Activated CD8-positive, alpha-beta T cell treated with anti-CD3 and anti-CD28 coated beads, Interleukin-2, amount 10 ng/mL, durations not matched to agents 7 days and 5 days (primary cell): ENCODE measurements at regions of chr1 and their contacts with region 1.

Region 1: GRCh38 chr1:108691942-108692723 is at the start of gene PRPF38B:
- DNase-seq: peak; percentile 97
- ATAC-seq: peak; percentile 89
- H3K4me3 Mint-ChIP-seq: peak within 1 kb of the TSS; percentile 96
- H3K27ac Mint-ChIP-seq: peak within 1 kb of the TSS; percentile 99
- H3K4me1 Mint-ChIP-seq: peaks cover 42% of the 10 kb centered on the region
- H3K27me3 Mint-ChIP-seq: no peaks in the 10 kb centered on the region
- total RNA-seq, gene PRPF38B: 66.8 to 69.1 TPM

Region 2: DNA sequence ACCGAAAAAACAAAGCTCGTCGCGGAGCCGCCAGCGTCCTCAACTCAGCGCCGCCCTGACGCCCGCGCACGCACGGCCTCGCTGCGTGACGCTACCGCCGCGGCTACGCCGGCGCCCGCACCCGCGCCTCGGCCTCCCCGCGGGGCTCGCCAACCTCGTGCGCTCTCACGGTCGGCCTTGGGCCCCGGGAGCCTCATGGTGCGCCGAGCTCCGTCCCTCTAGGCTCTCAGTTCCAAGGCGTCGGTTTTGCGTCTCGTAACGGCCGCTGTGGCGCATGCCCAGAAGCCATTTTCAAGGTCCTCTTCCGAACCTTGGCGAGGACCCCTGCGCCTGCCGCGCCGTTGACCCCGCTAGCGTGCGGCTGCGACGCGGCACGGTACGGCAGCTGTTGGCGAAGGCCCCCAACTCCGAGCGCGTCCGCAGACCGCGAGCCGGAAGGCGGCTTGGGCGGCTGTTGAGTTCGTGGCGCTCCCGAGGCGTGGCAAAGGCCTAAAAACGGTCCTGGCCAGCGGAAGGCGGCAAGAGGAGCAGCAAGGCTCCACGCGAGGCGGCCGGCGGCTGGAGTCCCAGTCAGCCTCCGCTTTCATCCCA is 31.0 kb before region 1 on chr1 and contains the start of gene HENMT1:
- CTCF ChIA-PET with region 1: interaction called, 32 read pairs
- POLR2A ChIA-PET with region 1: interaction called, 155 read pairs
- DNase-seq: peak; percentile 84
- ATAC-seq: peak; percentile 86
- H3K4me3 Mint-ChIP-seq: peak within 1 kb of the TSS; percentile 85
- H3K27ac Mint-ChIP-seq: peak within 1 kb of the TSS; percentile 97
- H3K4me1 Mint-ChIP-seq: peaks cover 51% of the 10 kb centered on the region
- H3K27me3 Mint-ChIP-seq: no peaks in the 10 kb centered on the region
- total RNA-seq, gene HENMT1: 38.7 to 40.5 TPM

Region 3: DNA sequence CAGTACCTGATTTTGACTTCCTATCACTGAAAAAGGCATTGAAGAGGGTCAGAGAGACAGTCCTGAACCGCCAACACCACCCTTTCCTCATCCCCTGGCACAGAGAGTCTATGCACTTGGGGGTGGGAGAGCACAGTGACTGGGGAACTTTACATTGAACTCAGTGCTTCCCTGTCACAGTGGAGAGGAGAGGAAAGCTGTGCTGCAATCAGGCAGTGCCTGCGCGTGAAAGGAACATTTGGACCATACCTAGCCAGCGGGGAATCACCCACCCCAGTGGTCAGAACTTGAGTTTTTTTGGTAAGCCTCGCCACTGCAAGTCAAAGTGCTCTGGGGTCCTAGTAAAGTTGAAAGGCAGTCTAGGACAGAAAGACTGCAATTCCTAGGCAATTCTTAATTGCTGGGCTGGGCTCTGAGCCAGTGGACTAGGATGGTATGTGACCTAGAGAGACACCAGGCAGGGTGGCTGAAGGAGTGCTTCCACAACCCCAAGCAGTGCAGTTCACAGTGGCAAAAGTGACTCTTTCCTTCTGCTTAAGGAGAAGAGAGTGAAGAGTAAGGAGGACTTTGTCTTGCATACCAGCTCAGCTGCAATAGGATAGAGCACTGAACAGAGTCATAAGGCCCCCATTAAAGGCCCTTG is 21.9 kb before region 1 on chr1:
- CTCF ChIA-PET with region 1: interaction called, 4 read pairs
- POLR2A ChIA-PET with region 1: interaction called, 155 read pairs
- DNase-seq: no peak
- ATAC-seq: no peak
- H3K4me3 Mint-ChIP-seq: no peak overlapping the region
- H3K27ac Mint-ChIP-seq: no peak overlapping the region
- H3K4me1 Mint-ChIP-seq: peaks cover 20% of the 10 kb centered on the region
- H3K27me3 Mint-ChIP-seq: peaks cover 2% of the 10 kb centered on the region

Region 4: GRCh38 chr1:108678706-108679105 is 13.4 kb before region 1 on chr1:
- CTCF ChIA-PET with region 1: interaction called, 20 read pairs
- POLR2A ChIA-PET with region 1: interaction called, 65 read pairs
- DNase-seq: no peak
- ATAC-seq: no peak
- H3K4me3 Mint-ChIP-seq: no peak overlapping the region
- H3K27ac Mint-ChIP-seq: no peak overlapping the region
- H3K4me1 Mint-ChIP-seq: peaks cover 10% of the 10 kb centered on the region
- H3K27me3 Mint-ChIP-seq: peaks cover 6% of the 10 kb centered on the region

Region 5: GRCh38 chr1:108708691-108709660 is 16.8 kb after region 1 on chr1:
- CTCF ChIA-PET with region 1: interaction called, 32 read pairs
- POLR2A ChIA-PET with region 1: interaction called, 67 read pairs
- DNase-seq: peak; percentile 75
- ATAC-seq: peak; percentile 82
- H3K4me3 Mint-ChIP-seq: no peak overlapping the region
- H3K27ac Mint-ChIP-seq: no peak overlapping the region
- H3K4me1 Mint-ChIP-seq: peaks cover 31% of the 10 kb centered on the region
- H3K27me3 Mint-ChIP-seq: peaks cover 10% of the 10 kb centered on the region

Region 6: GRCh38 chr1:108801101-108801500 is 109.0 kb after region 1 on chr1:
- CTCF ChIA-PET with region 1: no interaction called
- POLR2A ChIA-PET with region 1: no interaction called
- DNase-seq: no peak
- ATAC-seq: no peak
- H3K4me3 Mint-ChIP-seq: no peak overlapping the region
- H3K27ac Mint-ChIP-seq: no peak overlapping the region
- H3K4me1 Mint-ChIP-seq: no peaks in the 10 kb centered on the region
- H3K27me3 Mint-ChIP-seq: no peaks in the 10 kb centered on the region